Panc1 (cell line): ENCODE measurements at regions of chr18 and their contacts with region 1.

Region 1: DNA sequence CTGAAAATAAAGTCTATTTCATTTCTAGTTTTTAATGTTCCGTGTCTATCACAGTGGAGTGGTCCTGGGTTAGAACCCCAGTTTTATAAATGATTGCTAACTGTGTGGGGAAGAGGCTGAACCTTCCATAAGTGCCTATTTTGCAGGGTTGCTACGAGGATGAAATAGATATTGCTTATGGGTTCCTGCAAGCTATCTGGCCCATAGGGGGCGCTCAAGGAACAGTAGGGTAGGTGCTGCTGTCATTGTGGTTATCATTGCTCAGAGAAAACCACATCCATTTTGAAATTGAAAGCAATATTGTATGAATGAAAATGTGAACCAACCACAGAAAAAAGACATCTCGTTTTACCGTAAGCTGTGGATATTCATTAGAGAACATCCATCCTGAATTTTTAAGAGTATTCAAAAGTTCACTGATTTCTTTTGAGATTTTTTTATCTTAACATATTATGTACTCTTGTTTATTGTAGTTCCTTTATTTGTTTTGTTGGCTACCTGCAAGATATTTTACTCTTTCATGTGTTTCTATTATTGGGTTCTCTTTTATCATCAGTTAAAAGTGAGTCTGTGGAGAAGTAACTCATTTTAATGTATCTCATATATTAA is 261.6 kb downstream of the NAPG start:
- DNase-seq: peak; percentile 32
- ATAC-seq: no peak
- H3K4me3 ChIP-seq: no peak overlapping the region
- H3K27ac ChIP-seq: no peak overlapping the region
- H3K4me1 ChIP-seq: no peaks in the 10 kb centered on the region
- H3K27me3 ChIP-seq: peaks cover 3% of the 10 kb centered on the region; the same call in 1 of the 2 replicates
- CTCF ChIP-seq: peak; percentile 86

Region 2: DNA sequence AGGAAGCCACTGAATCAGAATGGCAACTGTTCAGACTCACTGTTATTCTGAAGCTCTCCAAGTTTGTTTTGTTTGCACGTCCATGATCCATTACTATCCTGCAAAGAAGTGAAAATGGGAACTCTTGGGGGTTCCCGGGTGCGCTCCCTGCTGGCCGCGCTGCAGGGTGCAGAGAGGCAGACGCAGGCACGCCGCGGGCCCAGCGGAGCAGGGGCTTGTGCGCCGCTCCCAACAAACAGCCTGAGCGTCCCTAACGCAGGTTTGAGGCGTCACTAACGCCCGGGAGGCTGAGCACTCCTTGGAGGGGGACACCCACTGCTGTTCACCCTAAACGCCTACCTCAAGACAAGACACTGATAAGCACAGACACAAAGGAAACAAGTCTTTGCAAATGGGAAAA is 376.3 kb after region 1 on chr18:
- CTCF ChIA-PET with region 1: no interaction called
- POLR2A ChIA-PET with region 1: no interaction called
- in situ Hi-C with region 1: no loop called
- intact Hi-C with region 1: loop called (anchors 10 kb)
- DNase-seq: no peak
- ATAC-seq: peak; percentile 45; the same call in 1 of the 2 replicates
- H3K4me3 ChIP-seq: no peak overlapping the region
- H3K27ac ChIP-seq: no peak overlapping the region
- H3K4me1 ChIP-seq: no peaks in the 10 kb centered on the region
- H3K27me3 ChIP-seq: no peaks in the 10 kb centered on the region; the same call in 1 of the 2 replicates
- CTCF ChIP-seq: peak; percentile 59